HEK293 (cell line): ENCODE measurements at regions of chr5 and their contacts with region 1.

Region 1: GRCh38 chr5:116947691-116948528 is 373.3 kb upstream of the SEMA6A start:
- H3K4me3 ChIP-seq: no peak overlapping the region
- H3K27ac ChIP-seq: no peak overlapping the region
- H3K4me1 ChIP-seq: no peaks in the 10 kb centered on the region
- CTCF ChIP-seq: peak; percentile 59; the same call in 1 of the 2 replicates

Region 2: GRCh38 chr5:116574367-116575325 is 373.3 kb before region 1 on chr5 and contains the start of gene SEMA6A:
- CTCF ChIA-PET with region 1: interaction called, 10 read pairs
- POLR2A ChIA-PET with region 1: no interaction called
- H3K4me3 ChIP-seq: peak within 1 kb of the TSS; percentile 68
- H3K27ac ChIP-seq: peak within 1 kb of the TSS; percentile 72
- H3K4me1 ChIP-seq: peaks cover 14% of the 10 kb centered on the region
- CTCF ChIP-seq: peak; percentile 96

Region 3: GRCh38 chr5:117318528-117318927 is 370.6 kb after region 1 on chr5:
- CTCF ChIA-PET with region 1: no interaction called
- POLR2A ChIA-PET with region 1: no interaction called
- H3K4me3 ChIP-seq: no peak overlapping the region
- H3K27ac ChIP-seq: no peak overlapping the region
- H3K4me1 ChIP-seq: no peaks in the 10 kb centered on the region
- CTCF ChIP-seq: no peak